ENCODE measurements at regions of chr1 and their contacts with region 1.

Region 1: GRCh38 chr1:26677306-26678115 is 18.3 kb upstream of the ARID1A start:
- DNase-seq: peak; percentile 94 to 95
- H3K4me3 ChIP-seq: peak overlapping the region in 1 of 4 donors; percentile 7
- H3K27ac ChIP-seq: peak overlapping the region in 4 of 5 donors; percentile 39 to 64 (median 50)
- H3K4me1 ChIP-seq: peaks cover 0 to 18% (median 15%) of the 10 kb centered on the region in 4 donors
- H3K27me3 ChIP-seq: no peaks in the 10 kb centered on the region
- CTCF ChIP-seq: peak in 5 of 7 experiments; percentile 57 to 94 (median 71)
- EP300 ChIP-seq: no peak
- POLR2A ChIP-seq: no peak

Region 2: GRCh38 chr1:26602378-26602959 is 75.0 kb before region 1 on chr1:
- intact Hi-C with region 1: loop called (anchors 5 kb)
- DNase-seq: peak in 1 of 2 donors; percentile 87
- H3K4me3 ChIP-seq: no peak overlapping the region
- H3K27ac ChIP-seq: no peak overlapping the region
- H3K4me1 ChIP-seq: peaks cover 0 to 7% (median 3%) of the 10 kb centered on the region in 4 donors
- H3K27me3 ChIP-seq: no peaks in the 10 kb centered on the region
- CTCF ChIP-seq: peak in 5 of 7 experiments; percentile 80 to 92 (median 83)
- EP300 ChIP-seq: no peak
- POLR2A ChIP-seq: no peak